Dendritic cell treated with granulocyte-macrophage colony-stimulating factor and Interleukin-4, amounts not matched to agents 40 ng/mL and 50 ng/mL, for 4 days (primary cell): ENCODE measurements at regions of chr11 and their contacts with region 1.

Region 1: DNA sequence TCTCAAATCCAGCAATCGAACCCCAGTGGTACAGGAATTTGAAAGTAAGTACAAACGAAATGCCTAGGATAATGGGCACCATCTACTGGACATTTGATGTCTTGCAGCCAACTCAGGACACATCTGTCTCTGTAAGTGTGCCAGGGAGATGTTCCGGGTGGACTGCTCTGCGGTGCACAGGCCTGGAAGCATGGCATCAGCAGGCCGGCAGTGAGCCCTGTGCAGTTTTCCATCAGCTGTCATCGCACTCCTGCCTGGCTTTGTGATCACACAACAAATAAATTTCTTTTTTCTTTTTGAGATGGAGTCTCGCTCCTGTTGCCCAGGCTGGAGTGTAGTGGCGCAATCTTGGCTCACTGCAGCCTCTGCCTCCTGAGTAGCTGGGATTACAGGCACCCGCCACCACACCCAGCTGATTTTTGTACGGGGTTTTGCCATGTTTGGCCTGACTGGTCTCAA is 71.0 kb downstream of the JAM3 start:
- H3K4me3 Mint-ChIP-seq: no peak overlapping the region
- H3K27ac Mint-ChIP-seq: no peak overlapping the region
- H3K4me1 Mint-ChIP-seq: peaks cover 10% of the 10 kb centered on the region
- H3K27me3 Mint-ChIP-seq: no peaks in the 10 kb centered on the region

Region 2: GRCh38 chr11:133927690-133928627 is 211.9 kb before region 1 on chr11:
- intact Hi-C with region 1: loop called (anchors 5 kb)
- H3K4me3 Mint-ChIP-seq: no peak overlapping the region
- H3K27ac Mint-ChIP-seq: no peak overlapping the region
- H3K4me1 Mint-ChIP-seq: peaks cover 5% of the 10 kb centered on the region
- H3K27me3 Mint-ChIP-seq: peaks cover 5% of the 10 kb centered on the region

Region 3: GRCh38 chr11:134050541-134051383 is 89.1 kb before region 1 on chr11:
- intact Hi-C with region 1: loop called (anchors 2 kb)
- H3K4me3 Mint-ChIP-seq: no peak overlapping the region
- H3K27ac Mint-ChIP-seq: no peak overlapping the region
- H3K4me1 Mint-ChIP-seq: peaks cover 5% of the 10 kb centered on the region
- H3K27me3 Mint-ChIP-seq: peaks cover 11% of the 10 kb centered on the region

Region 4: GRCh38 chr11:134120143-134120850 is 19.6 kb before region 1 on chr11:
- intact Hi-C with region 1: no loop called
- H3K4me3 Mint-ChIP-seq: no peak overlapping the region
- H3K27ac Mint-ChIP-seq: no peak overlapping the region
- H3K4me1 Mint-ChIP-seq: peaks cover 7% of the 10 kb centered on the region
- H3K27me3 Mint-ChIP-seq: peaks cover 31% of the 10 kb centered on the region

Region 5: GRCh38 chr11:134153147-134153905 is 13.4 kb after region 1 on chr11:
- intact Hi-C with region 1: no loop called
- H3K4me3 Mint-ChIP-seq: no peak overlapping the region
- H3K27ac Mint-ChIP-seq: no peak overlapping the region
- H3K4me1 Mint-ChIP-seq: peaks cover 6% of the 10 kb centered on the region
- H3K27me3 Mint-ChIP-seq: no peaks in the 10 kb centered on the region

Region 6: GRCh38 chr11:134196756-134197155 is 56.9 kb after region 1 on chr11:
- intact Hi-C with region 1: no loop called
- H3K4me3 Mint-ChIP-seq: no peak overlapping the region
- H3K27ac Mint-ChIP-seq: no peak overlapping the region
- H3K4me1 Mint-ChIP-seq: no peaks in the 10 kb centered on the region
- H3K27me3 Mint-ChIP-seq: no peaks in the 10 kb centered on the region

Region 7: GRCh38 chr11:134207538-134208239 is 67.8 kb after region 1 on chr11:
- intact Hi-C with region 1: no loop called
- H3K4me3 Mint-ChIP-seq: no peak overlapping the region
- H3K27ac Mint-ChIP-seq: no peak overlapping the region
- H3K4me1 Mint-ChIP-seq: peaks cover 7% of the 10 kb centered on the region
- H3K27me3 Mint-ChIP-seq: no peaks in the 10 kb centered on the region